ENCODE measurements at regions of chr6 and their contacts with region 1.

Region 1: DNA sequence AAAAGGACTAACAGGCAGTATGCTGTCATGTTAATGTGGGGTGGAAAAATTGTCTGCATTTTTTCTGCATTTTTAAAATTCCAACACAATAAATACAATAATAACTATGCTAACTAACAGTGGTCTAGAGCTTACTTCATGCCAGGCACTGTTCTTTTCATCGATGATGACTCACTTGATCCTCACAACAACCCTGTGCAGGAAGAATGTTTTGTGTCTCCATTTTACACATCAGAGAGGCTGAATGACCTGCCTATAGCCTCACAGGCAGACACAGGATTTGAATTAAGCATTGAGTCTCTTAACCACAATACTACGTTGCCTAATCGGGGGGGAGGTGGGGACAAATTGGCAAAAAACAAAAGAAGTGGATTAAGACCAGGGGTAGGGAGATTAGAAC is 26.9 kb upstream of the FANCE start:
- DNase-seq: peak; percentile 14 to 59
- H3K4me3 ChIP-seq: no peak overlapping the region
- H3K27ac ChIP-seq: no peak overlapping the region
- H3K4me1 ChIP-seq: no peaks in the 10 kb centered on the region
- H3K27me3 ChIP-seq: no peaks in the 10 kb centered on the region
- CTCF ChIP-seq: no peak

Region 2: DNA sequence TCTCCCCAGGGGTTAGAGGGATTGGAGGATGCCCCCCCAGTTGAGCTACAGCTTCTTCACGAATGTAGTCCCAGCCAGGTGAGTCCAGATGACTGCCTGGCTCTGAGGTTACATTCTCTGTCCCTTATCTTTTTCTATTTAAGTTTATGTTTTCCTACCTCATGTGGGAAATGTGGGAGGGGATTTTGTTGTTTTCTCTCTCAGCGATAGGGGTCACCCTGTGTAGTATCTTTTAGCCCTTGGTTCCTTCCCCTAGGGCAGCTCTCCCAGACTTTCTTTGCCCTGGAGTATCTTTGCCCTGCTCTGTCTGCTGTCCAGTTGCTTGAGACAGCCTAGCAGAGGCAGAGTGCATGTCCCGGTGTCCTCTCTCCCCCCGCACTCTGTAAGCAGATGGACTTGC is 32.6 kb after region 1 on chr6:
- CTCF ChIA-PET with region 1: no interaction called
- POLR2A ChIA-PET with region 1: interaction called, 29 read pairs
- intact Hi-C with region 1: no loop called
- DNase-seq: no peak
- H3K4me3 ChIP-seq: no peak overlapping the region
- H3K27ac ChIP-seq: no peak overlapping the region
- H3K4me1 ChIP-seq: peaks cover 29% of the 10 kb centered on the region
- H3K27me3 ChIP-seq: no peaks in the 10 kb centered on the region
- CTCF ChIP-seq: no peak